Endothelial cell of umbilical vein (primary cell): ENCODE measurements at regions of chr3 and their contacts with region 1.

Region 1: GRCh38 chr3:48439820-48440589 is at the starts of genes CCDC51 and TMA7:
- DNase-seq: peak; percentile 96
- H3K4me3 ChIP-seq: peak within 1 kb of the TSS; percentile 73 to 91 (median 77)
- H3K27ac ChIP-seq: peak within 1 kb of the TSS; percentile 79
- H3K4me1 ChIP-seq: peaks cover 16% of the 10 kb centered on the region
- H3K27me3 ChIP-seq: no peaks in the 10 kb centered on the region
- CTCF ChIP-seq: no peak
- POLR2A ChIP-seq: peak; percentile 75
- total RNA-seq, gene CCDC51: 9.8 and 11.2 TPM in 2 replicates
- total RNA-seq, gene TMA7: 306 and 332 TPM in 2 replicates

Region 2: GRCh38 chr3:48208076-48208475 is 231.9 kb before region 1 on chr3:
- CTCF ChIA-PET with region 1: interaction called, 19 read pairs
- POLR2A ChIA-PET with region 1: no interaction called
- dilution Hi-C with region 1: no loop called
- intact Hi-C with region 1: no loop called
- DNase-seq: no peak
- H3K4me3 ChIP-seq: no peak overlapping the region
- H3K27ac ChIP-seq: no peak overlapping the region
- H3K4me1 ChIP-seq: no peaks in the 10 kb centered on the region
- H3K27me3 ChIP-seq: no peaks in the 10 kb centered on the region
- CTCF ChIP-seq: no peak
- POLR2A ChIP-seq: no peak

Region 3: DNA sequence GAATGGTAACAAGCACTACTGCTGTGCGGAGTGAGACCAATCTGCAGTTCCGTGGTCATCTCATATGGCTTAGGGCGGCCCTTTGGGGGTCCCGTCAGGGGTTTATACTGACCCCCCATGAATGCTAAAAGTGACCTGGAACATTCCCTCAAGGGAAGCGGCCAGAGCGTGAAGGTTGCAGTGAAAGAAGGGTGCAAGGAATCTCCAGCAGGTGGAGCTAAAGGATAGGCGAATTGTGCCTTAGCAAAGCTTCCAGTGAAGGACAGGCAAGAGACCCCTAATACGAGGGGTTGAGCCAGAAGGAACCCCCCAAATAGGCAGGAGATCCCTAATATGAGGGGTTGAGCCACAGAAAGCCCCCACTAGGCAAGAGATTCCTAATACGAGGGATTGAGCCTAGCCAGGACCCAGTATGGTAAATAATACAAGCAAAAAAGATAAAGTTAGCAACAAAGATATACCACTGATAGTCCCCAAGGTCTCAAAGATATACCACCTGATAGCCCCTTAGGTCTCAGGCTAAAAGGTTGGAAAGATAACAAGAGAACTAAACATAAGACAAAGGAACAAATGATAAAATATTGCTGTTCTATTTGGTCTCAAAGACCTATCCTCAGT is 166.3 kb before region 1 on chr3:
- CTCF ChIA-PET with region 1: interaction called, 723 read pairs
- POLR2A ChIA-PET with region 1: no interaction called
- dilution Hi-C with region 1: no loop called
- intact Hi-C with region 1: loop called (anchors 1 kb)
- DNase-seq: peak; percentile 76
- H3K4me3 ChIP-seq: no peak overlapping the region
- H3K27ac ChIP-seq: no peak overlapping the region
- H3K4me1 ChIP-seq: no peaks in the 10 kb centered on the region
- H3K27me3 ChIP-seq: no peaks in the 10 kb centered on the region
- CTCF ChIP-seq: peak; percentile 64 to 73
- POLR2A ChIP-seq: no peak

Region 4: GRCh38 chr3:48318783-48319468 is 121.1 kb before region 1 on chr3:
- CTCF ChIA-PET with region 1: interaction called, 15 read pairs
- POLR2A ChIA-PET with region 1: no interaction called
- dilution Hi-C with region 1: no loop called
- intact Hi-C with region 1: no loop called
- DNase-seq: no peak
- H3K4me3 ChIP-seq: no peak overlapping the region
- H3K27ac ChIP-seq: no peak overlapping the region
- H3K4me1 ChIP-seq: no peaks in the 10 kb centered on the region
- H3K27me3 ChIP-seq: peaks cover 17 to 19% of the 10 kb centered on the region in 2 experiments
- CTCF ChIP-seq: no peak
- POLR2A ChIP-seq: no peak

Region 5: DNA sequence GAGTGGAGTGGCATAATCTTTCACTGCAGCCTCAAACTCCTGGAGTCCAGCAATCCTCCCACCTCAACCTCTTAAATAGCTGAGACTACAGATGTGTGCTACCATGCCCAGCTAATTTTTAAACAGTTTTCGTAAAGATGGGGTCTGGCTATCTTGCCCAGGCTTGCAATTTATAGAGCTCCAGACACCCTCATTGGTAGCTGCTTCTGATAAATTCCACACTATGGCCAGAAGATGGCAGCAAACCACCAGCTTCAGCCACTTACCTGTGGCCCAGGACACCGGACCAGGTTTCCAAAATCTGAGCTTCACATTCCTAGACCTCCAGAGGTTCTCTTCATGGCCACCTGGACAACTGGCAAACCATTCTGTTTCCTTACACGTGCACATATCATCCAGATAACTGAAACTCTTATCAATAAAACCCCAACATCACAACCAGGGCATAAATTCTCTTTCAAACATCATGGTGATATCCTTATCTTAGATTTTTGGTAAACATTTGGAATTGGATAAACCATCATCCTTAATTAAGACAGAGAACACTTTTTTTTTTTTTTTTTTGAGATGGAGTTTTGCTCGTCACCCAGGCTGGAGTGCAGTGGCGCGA is 39.1 kb before region 1 on chr3:
- CTCF ChIA-PET with region 1: interaction called, 716 read pairs
- POLR2A ChIA-PET with region 1: interaction called, 7 read pairs
- dilution Hi-C with region 1: no loop called
- intact Hi-C with region 1: loop called (anchors 1 kb)
- DNase-seq: peak; percentile 52
- H3K4me3 ChIP-seq: no peak overlapping the region
- H3K27ac ChIP-seq: no peak overlapping the region
- H3K4me1 ChIP-seq: peaks cover 10% of the 10 kb centered on the region
- H3K27me3 ChIP-seq: peaks cover 1% of the 10 kb centered on the region in 2 experiments
- CTCF ChIP-seq: peak; percentile 69 to 72
- POLR2A ChIP-seq: no peak

Region 6: DNA sequence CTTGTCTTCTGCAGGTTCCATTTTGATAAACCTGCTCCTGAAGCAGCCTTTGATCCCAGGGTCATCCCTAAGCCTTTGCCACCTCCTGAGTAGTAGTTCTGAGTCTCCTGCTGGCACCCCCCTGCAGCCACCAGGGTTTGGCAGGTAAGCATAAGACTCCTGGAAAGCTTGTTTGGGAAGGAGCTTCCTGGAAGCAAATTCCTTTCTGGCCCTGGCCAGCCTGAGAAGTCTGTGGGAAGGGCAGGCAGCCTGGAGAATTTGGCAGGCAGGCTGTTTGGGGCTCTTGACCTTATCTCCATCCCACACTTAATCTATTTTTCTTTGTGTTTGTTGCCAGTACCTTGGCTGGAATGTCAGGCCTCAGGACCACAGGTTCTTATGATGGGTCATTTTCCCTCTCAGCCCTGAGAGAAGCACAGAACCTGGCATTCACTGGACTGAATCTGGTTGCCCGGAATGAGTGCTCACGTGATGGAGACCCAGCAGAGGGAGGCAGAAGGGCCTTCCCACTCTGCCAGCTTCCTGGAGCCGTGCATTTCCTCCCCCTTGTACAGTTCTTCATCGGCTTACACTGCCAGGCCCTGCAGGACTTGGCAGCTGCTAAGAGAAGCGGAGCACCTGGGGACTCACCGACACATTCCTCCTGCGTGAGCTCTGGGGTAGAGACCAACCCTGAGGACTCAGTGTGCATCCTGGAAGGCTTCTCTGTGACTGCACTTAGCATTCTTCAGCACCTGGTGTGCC is 19.9 kb after region 1 on chr3:
- CTCF ChIA-PET with region 1: interaction called, 59 read pairs
- POLR2A ChIA-PET with region 1: no interaction called
- dilution Hi-C with region 1: no loop called
- intact Hi-C with region 1: loop called (anchors 1 kb)
- DNase-seq: no peak
- H3K4me3 ChIP-seq: no peak overlapping the region
- H3K27ac ChIP-seq: no peak overlapping the region
- H3K4me1 ChIP-seq: peaks cover 1% of the 10 kb centered on the region
- H3K27me3 ChIP-seq: no peaks in the 10 kb centered on the region
- CTCF ChIP-seq: no peak
- POLR2A ChIP-seq: no peak

Region 7: GRCh38 chr3:48548729-48549705 is 109.0 kb after region 1 on chr3:
- CTCF ChIA-PET with region 1: interaction called, 63 read pairs
- POLR2A ChIA-PET with region 1: no interaction called
- dilution Hi-C with region 1: no loop called
- intact Hi-C with region 1: loop called (anchors 2 kb)
- DNase-seq: peak; percentile 75
- H3K4me3 ChIP-seq: no peak overlapping the region
- H3K27ac ChIP-seq: no peak overlapping the region
- H3K4me1 ChIP-seq: no peaks in the 10 kb centered on the region
- H3K27me3 ChIP-seq: no peaks in the 10 kb centered on the region
- CTCF ChIP-seq: peak; percentile 94 to 97
- POLR2A ChIP-seq: no peak